ENCODE measurements at regions of chr1 and their contacts with region 1.

Region 1: DNA sequence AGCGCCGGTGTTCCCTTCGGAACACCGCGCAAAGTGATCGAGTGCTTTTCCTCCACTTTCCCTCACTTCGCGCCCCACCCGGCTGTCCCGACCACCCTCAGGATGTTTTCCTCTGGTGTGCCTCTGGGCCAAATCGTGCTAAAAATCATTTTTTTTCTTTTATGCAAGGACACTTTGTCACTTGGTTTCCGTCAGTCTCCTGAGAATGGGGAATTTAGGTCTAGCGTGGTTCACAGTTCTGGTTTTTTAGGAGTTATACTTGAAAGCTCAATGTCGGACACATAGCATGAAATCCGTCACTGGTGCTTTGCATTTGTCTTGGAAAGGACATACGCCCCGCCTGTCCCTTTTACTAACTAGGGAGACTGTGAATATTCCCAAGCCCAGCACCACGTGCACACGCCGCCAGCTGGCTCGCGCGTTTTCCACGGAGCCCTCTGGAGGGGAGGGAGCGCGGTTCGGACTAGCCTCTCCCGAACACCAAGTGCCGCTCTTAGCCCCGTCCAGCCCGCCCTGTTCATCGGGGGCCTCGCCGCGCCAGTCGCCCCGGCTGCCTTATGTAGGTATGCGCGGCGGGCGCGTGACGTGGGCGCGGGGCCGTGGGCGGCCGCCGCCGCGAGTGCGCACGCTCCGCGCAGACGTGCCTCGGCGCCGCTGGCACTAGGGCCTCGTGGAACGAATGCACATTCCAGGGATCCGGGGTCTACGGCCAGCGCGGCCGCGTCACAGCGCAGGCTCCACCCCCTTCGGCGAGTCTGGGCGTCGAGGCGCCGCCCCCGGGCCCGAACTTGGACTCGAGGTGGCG is 572 bp upstream of the IRF2BP2 start:
- DNase-seq: peak; percentile 98 to 99 (median 99)
- ATAC-seq: peak; percentile 81 to 85
- H3K4me3 ChIP-seq: peak overlapping the region; percentile 71
- H3K27ac ChIP-seq: peak overlapping the region; percentile 99
- H3K4me1 ChIP-seq: peaks cover 4% of the 10 kb centered on the region
- H3K27me3 ChIP-seq: no peaks in the 10 kb centered on the region

Region 2: DNA sequence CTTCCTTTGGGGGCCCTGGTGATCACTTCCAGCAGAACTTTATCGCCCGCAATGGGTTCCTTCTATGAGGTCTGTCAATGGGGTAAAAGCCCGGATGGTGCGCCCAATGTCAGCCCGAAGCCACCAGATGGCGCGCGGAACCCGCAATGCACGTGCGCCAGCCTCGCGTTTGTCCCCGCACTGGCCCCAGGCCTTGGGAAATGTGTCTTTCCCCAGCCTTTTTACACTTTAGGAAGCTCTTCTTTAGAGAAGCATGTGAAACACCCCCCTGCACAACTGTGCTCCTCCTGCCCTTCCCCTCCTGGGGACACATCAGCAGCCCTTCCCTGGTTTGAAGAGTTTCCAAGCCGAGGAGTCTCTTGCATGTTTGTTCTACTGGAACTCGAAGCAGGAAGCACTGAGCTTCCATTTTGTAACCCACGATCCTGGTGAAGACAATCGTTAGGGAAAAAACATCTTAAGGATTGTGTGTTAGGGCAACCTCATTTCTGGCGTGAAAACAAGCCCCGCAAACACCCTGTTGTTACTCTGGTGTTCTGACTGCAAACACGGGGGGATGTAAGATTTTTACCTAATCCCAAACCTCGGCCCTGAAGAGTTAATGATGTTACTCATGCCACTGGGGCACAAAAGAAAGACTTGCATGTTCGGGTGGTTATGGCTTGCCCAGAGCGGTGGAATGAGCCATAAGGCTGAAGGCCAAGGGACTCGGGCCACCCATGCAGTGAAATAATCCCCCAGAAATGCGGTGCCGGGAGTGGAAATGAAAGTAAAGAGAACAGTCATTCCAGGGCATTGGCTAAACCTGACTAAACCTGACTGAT is 111.2 kb before region 1 on chr1:
- intact Hi-C with region 1: loop called in 3 of 4 experiments (anchors 2 to 5 kb)
- DNase-seq: peak; percentile 90 to 97 (median 97)
- ATAC-seq: peak; percentile 95 to 96
- H3K4me3 ChIP-seq: peak overlapping the region; percentile 6
- H3K27ac ChIP-seq: peak overlapping the region; percentile 92
- H3K4me1 ChIP-seq: peaks cover 10% of the 10 kb centered on the region
- H3K27me3 ChIP-seq: no peaks in the 10 kb centered on the region

Region 3: DNA sequence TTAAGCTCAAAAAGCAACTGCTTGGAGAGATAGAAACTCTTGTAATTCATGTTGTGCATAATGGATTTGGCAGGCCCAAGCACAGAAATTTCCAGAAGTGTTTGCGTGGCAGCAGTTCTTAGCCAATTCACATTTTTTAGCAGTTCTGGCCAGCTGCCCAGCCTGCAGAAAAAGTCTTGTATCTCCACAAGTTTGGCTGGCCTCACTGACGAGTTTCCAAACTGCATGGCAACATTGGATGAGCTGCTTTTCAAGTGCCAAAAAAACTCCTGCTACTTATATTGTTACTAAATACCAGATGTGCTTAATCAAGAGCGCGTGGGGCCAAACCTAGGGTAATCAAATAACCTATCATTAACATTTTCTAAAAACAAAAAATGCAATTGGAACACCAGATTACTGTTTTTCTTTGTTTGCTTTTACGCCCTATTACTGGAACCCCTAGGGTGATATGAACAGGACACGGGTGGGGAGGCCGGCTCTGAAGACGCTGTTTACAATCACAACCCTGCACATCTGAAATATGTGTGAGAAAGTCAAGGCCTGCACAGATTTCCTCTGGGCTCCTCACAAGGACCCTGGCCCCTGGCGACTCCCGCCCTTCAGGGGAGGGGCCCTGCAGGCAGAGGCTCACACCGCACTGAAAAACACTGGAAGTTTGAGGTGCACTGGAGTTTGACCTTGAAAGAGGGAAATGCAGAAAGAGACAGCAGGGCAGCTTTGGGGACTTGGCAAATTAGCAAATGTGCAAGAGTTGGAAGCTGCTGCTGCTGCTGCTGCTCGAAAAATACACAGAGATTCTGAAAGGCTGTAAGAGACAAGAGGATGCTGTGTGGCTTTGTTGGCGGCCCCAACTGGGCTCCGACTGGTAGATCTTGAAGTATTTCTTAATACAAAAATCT is 76.3 kb before region 1 on chr1:
- intact Hi-C with region 1: loop called in 3 of 4 experiments (anchors 5 kb)
- DNase-seq: peak; percentile 96 to 98 (median 96)
- ATAC-seq: peak; percentile 28 to 34
- H3K4me3 ChIP-seq: no peak overlapping the region
- H3K27ac ChIP-seq: peak overlapping the region; percentile 100
- H3K4me1 ChIP-seq: peaks cover 50% of the 10 kb centered on the region
- H3K27me3 ChIP-seq: no peaks in the 10 kb centered on the region

Region 4: DNA sequence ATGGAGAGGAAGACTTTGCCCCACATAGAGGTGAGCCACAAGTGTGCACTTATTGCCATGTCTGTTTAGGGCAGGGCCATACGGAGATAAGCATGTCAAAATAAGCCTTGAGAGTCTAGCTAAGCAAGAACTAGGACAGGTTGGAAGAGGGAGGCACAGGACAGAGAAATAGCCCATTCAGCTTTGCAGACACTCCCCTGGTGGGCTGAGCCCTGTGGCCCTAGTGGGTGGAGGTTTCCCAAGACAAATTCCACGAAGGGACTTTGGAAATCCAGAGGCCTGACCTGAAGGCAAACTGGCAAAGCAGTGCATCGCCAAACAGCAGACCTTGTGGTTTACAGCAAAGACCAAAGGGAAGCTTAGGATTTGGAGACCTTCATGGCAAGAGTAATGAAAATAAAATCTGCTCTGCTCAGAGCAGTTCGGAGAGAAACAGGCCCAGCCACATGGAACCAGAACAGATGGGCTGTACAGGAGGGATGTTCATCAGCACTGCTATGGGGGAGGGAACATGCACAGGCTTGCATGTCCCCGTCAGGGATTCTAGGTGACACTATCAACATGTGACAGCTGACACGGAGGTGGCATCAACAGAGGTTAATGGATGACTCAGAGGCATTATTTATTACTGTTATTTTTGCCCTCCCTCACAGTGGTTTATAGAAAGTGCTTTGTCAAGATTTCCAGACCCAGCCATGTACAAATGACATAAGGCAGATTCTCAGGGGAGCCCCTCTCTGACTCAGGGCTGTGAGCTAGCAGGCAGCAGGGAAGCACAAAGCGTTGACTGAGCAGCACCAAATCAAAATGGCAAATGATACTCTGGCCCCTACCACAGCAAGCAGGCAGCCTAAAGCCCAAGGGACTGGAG is 89.5 kb after region 1 on chr1:
- intact Hi-C with region 1: loop called in 1 of 4 experiments (anchors 5 kb)
- DNase-seq: peak in 2 of 3 donors; percentile 61 to 65
- ATAC-seq: peak; percentile 14 to 62
- H3K4me3 ChIP-seq: no peak overlapping the region
- H3K27ac ChIP-seq: peak overlapping the region; percentile 29
- H3K4me1 ChIP-seq: peaks cover 7% of the 10 kb centered on the region
- H3K27me3 ChIP-seq: no peaks in the 10 kb centered on the region

Region 5: DNA sequence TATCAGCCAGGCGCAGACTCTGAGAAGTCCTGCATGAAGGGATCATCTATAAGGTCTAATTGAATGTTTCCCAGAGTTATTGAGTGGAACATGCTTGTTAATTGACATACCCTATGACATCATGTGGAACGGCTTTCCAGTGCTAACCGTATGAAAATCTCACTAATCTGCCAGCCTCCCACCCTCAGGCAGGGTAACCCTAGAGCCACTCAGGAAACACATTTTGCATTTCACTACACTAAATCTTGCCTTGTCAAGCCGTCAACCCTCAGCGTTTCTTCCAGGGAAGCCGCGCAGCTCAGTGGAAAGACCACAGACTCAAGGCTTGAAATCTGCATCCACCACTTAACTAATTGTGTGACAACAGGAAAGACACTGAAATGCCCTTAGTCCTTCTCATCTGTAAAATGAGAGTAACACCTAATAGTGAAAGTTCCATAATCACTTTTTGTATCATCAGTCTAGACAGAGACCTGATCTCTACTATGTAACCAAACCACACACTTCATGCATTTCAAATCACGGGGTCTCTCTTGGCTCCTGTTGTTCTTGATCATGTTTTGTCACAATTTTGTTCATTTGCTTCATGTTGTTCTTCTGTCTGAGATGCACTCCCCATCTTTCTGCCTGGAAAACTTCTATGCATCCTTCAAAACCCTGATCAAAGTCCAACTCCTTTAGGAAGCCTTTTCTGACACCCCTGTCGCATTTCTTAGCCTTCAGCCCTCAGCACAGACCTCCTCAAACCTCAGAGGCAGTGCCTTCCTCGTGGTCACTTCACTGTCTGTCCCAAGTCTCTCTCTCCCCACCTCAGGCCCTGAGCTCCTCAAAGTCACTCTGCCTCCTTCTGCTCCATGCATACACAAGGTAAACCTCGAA is 271.6 kb after region 1 on chr1:
- intact Hi-C with region 1: loop called in 1 of 4 experiments (anchors 10 kb)
- DNase-seq: no peak
- ATAC-seq: no peak
- H3K4me3 ChIP-seq: no peak overlapping the region
- H3K27ac ChIP-seq: no peak overlapping the region
- H3K4me1 ChIP-seq: peaks cover 14% of the 10 kb centered on the region
- H3K27me3 ChIP-seq: no peaks in the 10 kb centered on the region

Region 6: DNA sequence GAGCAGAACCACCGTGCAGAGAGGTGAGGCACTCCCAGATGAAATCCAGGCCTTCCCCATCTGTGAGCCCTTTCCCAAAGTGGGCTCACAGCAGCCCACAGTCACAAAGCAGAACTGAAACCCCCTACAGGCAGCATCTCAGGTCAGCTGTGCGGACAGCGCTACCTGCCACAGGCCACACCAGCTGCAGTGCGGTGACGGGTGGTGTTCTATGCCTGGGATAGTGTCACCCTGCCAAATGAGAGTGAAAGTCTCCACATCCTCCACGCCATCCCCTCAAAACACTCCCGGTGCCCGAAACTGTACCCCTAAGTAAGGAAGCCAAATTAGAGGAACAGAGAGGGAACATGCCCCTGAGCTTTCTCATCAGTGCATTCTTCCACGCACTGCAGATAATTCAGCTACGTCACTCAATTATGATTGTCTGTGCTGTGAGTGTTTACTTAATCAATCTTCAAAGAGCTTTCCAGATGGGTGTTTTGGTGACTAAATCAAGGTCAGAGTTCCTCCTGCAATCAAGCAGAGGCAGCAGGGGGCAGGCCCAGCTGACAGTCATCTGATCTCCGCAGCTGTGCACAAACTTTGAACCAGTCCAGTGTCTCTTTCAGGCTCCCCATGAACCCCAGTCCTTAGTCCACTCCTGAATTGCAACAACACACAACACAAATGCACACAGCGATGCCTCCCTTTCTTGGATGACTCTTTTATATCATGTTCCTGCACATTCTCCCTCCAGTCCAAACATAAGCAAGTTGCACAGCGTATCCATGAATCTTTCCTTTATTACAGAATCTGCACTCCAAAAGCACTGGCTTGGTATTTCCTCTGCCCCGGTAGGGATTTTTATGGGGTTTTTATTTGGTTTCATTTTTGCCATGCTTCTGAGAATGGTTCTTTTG is 368.1 kb after region 1 on chr1:
- intact Hi-C with region 1: loop called in 2 of 4 experiments (anchors 5 to 10 kb)
- DNase-seq: peak in 1 of 3 donors; percentile 77
- ATAC-seq: peak in 1 of 2 donors; percentile 24
- H3K4me3 ChIP-seq: no peak overlapping the region
- H3K27ac ChIP-seq: peak overlapping the region; percentile 98
- H3K4me1 ChIP-seq: peaks cover 39% of the 10 kb centered on the region
- H3K27me3 ChIP-seq: no peaks in the 10 kb centered on the region

Region 7: GRCh38 chr1:234997201-234997895 is 386.8 kb after region 1 on chr1:
- intact Hi-C with region 1: loop called in 1 of 4 experiments (anchors 10 kb)
- DNase-seq: peak; percentile 99
- ATAC-seq: peak; percentile 95 to 96
- H3K4me3 ChIP-seq: no peak overlapping the region
- H3K27ac ChIP-seq: peak overlapping the region; percentile 99
- H3K4me1 ChIP-seq: peaks cover 9% of the 10 kb centered on the region
- H3K27me3 ChIP-seq: no peaks in the 10 kb centered on the region